ENCODE measurements at regions of chr19 and their contacts with region 1.

Region 1: DNA sequence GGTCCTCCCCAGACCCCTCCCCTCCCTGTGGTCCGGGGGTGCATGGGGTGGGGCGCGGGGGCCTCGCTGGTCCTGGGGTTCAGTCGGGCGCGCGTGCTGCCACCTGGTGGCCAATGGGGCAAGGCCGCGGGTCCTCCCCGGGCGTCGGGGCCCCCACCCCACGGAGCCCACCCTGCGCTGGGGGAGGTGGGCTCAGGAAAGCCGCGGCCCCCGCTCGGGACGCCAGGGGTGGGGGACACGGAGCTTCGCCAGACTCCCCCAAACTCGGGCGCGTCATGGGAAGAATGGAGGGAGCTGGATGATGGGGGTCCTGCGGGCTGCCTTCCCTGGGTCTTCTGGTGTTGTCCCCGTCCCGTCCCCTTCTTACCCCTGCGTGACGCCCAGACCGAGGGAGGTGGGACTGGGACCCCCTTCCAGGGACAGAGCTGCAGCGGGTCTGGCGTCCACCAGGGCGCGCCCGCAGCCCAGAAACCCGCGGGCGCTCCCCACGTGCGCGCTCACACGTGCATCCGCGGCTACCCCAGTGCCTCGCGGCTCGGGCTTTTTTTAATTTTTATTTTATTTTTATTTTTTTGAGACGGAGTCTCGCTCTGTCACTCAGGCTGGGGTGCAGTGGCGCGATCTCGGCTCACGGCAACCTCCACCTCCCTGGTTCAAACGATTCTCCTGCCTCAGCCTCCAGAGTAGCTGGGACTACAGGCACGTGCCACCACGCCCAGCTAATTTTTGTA is 19.8 kb upstream of the TCF3 start:
- DNase-seq: no peak
- H3K4me3 ChIP-seq: peak overlapping the region; percentile 36
- H3K27me3 ChIP-seq: peaks cover 24% of the 10 kb centered on the region
- CTCF ChIP-seq: peak; percentile 84

Region 2: GRCh38 chr19:1551068-1552040 is 120.8 kb before region 1 on chr19:
- CTCF ChIA-PET with region 1: interaction called, 128 read pairs
- POLR2A ChIA-PET with region 1: no interaction called
- DNase-seq: no peak
- H3K4me3 ChIP-seq: no peak overlapping the region
- H3K27me3 ChIP-seq: no peaks in the 10 kb centered on the region
- CTCF ChIP-seq: no peak

Region 3: GRCh38 chr19:1616396-1616795 is 55.8 kb before region 1 on chr19:
- CTCF ChIA-PET with region 1: interaction called, 13 read pairs
- POLR2A ChIA-PET with region 1: no interaction called
- DNase-seq: peak; percentile 22
- H3K4me3 ChIP-seq: no peak overlapping the region
- H3K27me3 ChIP-seq: no peaks in the 10 kb centered on the region
- CTCF ChIP-seq: no peak

Region 4: GRCh38 chr19:1698636-1699035 is 26.4 kb after region 1 on chr19:
- CTCF ChIA-PET with region 1: interaction called, 20 read pairs
- POLR2A ChIA-PET with region 1: no interaction called
- DNase-seq: no peak
- H3K4me3 ChIP-seq: no peak overlapping the region
- H3K27me3 ChIP-seq: peaks cover 11% of the 10 kb centered on the region
- CTCF ChIP-seq: no peak

Region 5: DNA sequence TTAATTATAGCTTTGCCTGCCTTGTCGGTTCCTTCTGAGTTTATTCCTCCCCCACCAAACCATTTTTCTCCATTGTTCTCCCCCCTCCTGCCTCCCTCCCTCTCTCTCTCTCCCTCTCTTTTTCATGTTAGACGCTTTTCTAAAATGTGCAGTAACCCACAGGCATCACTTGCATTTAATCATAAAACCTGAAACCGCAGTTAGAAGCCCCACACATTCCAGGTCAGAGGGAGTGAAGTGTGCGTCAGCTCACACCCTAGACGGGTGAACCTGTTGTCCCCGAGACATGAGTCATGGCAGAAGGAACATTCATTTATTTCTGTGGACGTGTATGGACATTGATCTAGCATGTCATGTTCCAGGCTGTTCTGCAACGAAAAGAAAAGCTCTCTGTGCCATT is 101.0 kb after region 1 on chr19:
- CTCF ChIA-PET with region 1: interaction called, 87 read pairs
- POLR2A ChIA-PET with region 1: no interaction called
- DNase-seq: peak; percentile 17
- H3K4me3 ChIP-seq: no peak overlapping the region
- H3K27me3 ChIP-seq: peaks cover 27% of the 10 kb centered on the region
- CTCF ChIP-seq: no peak

Region 6: GRCh38 chr19:1794424-1795172 is 122.4 kb after region 1 on chr19:
- CTCF ChIA-PET with region 1: interaction called, 81 read pairs
- POLR2A ChIA-PET with region 1: no interaction called
- DNase-seq: no peak
- H3K4me3 ChIP-seq: no peak overlapping the region
- H3K27me3 ChIP-seq: no peaks in the 10 kb centered on the region
- CTCF ChIP-seq: no peak

Measured in BJ (cell line).